ENCODE measurements at regions of chr1 and their contacts with region 1.

Region 1: GRCh38 chr1:93629099-93630059 is 52.3 kb downstream of the BCAR3 start:
- DNase-seq: peak; percentile 85
- ATAC-seq: peak; percentile 78
- H3K4me3 ChIP-seq: no peak overlapping the region
- H3K27ac ChIP-seq: 0 out of 2 replicates have a peak overlapping the region, but pooled peaks have one; percentile 8
- H3K4me1 ChIP-seq: peaks cover 12% of the 10 kb centered on the region
- H3K27me3 ChIP-seq: no peaks in the 10 kb centered on the region
- CTCF ChIP-seq: peak; percentile 88
- POLR2A ChIP-seq: 0 out of 2 replicates have a peak, but pooled peaks have one; percentile 24
- RAD21 ChIP-seq: peak; percentile 95

Region 2: DNA sequence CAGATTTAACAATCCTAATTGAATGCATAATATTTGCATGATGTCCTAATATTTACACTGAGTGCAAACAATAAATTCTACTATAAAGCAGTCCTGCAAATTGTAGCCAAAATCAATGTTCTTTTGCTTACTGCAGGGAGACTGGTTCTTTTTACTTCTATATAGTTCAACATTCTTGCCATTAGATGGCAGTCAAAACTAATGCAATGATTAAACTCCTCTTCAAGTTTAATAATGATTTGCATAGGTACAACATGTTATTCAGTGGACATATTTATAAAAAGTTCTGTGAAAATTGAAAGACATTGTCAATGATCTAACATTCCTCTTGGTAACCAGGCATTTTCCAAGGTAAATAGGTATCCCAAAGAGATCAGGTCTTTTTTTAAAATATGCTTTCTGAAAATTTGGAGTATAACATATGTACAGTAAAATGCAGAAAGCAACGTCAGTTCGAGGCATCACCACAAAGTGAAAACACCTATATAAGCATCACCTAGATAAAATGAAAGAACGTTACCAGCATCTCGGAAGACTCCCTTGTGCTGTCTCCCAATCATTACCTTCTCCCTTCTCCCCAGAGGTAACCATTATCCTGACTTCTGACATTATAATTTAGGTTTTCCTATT is 191.3 kb before region 1 on chr1:
- CTCF ChIA-PET with region 1: no interaction called
- POLR2A ChIA-PET with region 1: no interaction called
- dilution Hi-C with region 1: no loop called
- in situ Hi-C with region 1: loop called (anchors 10 kb)
- intact Hi-C with region 1: loop called (anchors 2 kb)
- DNase-seq: peak; percentile 65
- ATAC-seq: peak; percentile 82
- H3K4me3 ChIP-seq: no peak overlapping the region
- H3K27ac ChIP-seq: no peak overlapping the region
- H3K4me1 ChIP-seq: no peaks in the 10 kb centered on the region
- H3K27me3 ChIP-seq: peaks cover 17% of the 10 kb centered on the region
- CTCF ChIP-seq: peak; percentile 78
- POLR2A ChIP-seq: no peak
- RAD21 ChIP-seq: peak; percentile 81

Region 3: GRCh38 chr1:93591676-93592550 is 37.5 kb before region 1 on chr1:
- CTCF ChIA-PET with region 1: no interaction called
- POLR2A ChIA-PET with region 1: no interaction called
- dilution Hi-C with region 1: no loop called
- in situ Hi-C with region 1: no loop called
- intact Hi-C with region 1: no loop called
- DNase-seq: no peak
- ATAC-seq: no peak
- H3K4me3 ChIP-seq: no peak overlapping the region
- H3K27ac ChIP-seq: no peak overlapping the region
- H3K4me1 ChIP-seq: peaks cover 19% of the 10 kb centered on the region
- H3K27me3 ChIP-seq: no peaks in the 10 kb centered on the region
- CTCF ChIP-seq: no peak
- POLR2A ChIP-seq: no peak
- RAD21 ChIP-seq: no peak

Region 4: DNA sequence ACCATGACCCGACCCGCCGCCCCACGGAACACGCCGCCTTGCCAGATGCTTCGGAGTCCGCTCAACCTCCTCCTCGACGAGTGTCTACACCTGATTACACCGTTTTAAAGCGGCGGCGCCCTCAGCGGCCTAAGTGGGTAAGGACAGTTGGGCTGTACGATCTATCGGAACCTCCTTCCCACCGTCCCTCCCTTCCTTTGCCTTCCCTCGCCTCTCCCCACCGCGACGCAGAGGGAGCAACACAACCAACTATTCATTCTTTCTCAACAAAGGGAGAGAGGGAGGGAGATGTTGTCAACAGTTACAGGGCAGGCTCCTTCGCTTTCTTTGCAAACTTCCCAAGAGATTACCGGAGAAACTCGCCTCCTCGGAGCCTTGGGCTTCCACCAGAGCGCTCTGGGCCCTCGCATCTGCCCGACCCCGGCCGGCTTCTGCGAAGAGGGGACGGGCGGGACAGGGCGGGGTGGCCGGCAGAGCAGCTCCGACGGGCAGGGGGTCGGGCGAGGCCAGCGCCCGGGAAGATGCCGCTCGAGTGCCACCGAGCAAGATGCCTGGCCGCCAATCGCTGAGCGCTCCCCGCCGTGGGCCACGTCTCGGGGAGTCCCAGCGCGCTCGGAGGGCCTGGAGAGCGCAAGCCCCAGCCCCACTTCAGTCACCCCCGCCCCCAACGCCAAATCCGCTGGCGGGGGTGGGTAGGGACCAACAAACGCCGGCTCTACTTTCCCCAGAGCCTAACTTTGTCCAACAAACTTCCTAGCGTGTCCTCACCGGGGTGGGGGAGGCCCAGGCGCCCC is 51.6 kb after region 1 on chr1:
- CTCF ChIA-PET with region 1: interaction called, 7 read pairs
- POLR2A ChIA-PET with region 1: no interaction called
- dilution Hi-C with region 1: no loop called
- in situ Hi-C with region 1: no loop called
- intact Hi-C with region 1: loop called (anchors 1 kb)
- DNase-seq: peak; percentile 89
- ATAC-seq: peak; percentile 75
- H3K4me3 ChIP-seq: peak overlapping the region; percentile 57
- H3K27ac ChIP-seq: peak overlapping the region; percentile 67
- H3K4me1 ChIP-seq: peaks cover 21% of the 10 kb centered on the region
- H3K27me3 ChIP-seq: no peaks in the 10 kb centered on the region
- CTCF ChIP-seq: peak; percentile 62
- POLR2A ChIP-seq: no peak
- RAD21 ChIP-seq: peak; percentile 66

Region 5: GRCh38 chr1:93734999-93735398 is 105.6 kb after region 1 on chr1:
- CTCF ChIA-PET with region 1: no interaction called
- POLR2A ChIA-PET with region 1: no interaction called
- dilution Hi-C with region 1: no loop called
- in situ Hi-C with region 1: no loop called
- intact Hi-C with region 1: loop called (anchors 5 kb)
- DNase-seq: no peak
- ATAC-seq: no peak
- H3K4me3 ChIP-seq: no peak overlapping the region
- H3K27ac ChIP-seq: no peak overlapping the region
- H3K4me1 ChIP-seq: peaks cover 20% of the 10 kb centered on the region
- H3K27me3 ChIP-seq: no peaks in the 10 kb centered on the region
- CTCF ChIP-seq: peak; percentile 40
- POLR2A ChIP-seq: no peak
- RAD21 ChIP-seq: peak; percentile 32

Region 6: DNA sequence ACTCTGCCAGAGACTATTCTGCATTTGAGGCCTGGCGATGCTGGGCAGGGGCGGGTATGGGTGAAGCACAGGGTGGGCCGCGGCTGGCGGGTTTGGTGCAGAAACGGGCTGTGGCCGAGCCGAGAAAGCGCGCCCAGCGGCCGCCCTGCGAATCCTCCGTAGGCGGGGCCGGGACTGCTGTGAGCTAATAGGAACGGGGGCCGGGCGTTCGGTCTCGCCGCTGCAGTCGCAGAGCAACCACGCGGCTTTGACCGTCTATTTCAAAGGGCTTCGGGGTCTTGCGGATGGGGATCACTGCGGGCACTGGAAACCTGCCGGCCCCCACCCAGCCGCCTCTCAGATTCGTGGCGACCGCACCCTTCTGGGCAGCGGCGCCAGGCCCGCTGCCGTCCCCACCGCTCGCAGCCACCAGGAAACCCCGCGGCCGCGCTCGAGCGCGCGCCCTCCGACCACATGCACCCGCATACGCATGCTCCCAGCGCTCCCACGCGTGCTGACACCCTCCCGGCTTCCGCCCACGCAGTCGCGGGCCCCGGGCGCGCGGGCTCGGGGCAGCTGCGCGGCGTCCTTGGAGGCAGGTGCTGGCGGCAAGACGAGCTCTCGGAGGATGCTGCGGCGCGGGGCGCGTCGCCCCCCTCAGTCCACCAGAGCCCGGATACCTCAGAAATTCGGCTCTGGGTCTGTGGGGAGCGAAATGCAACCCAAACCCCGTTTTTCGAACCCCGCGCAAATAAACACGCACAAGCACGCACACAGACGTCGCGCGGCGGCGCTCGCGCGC is 217.0 kb after region 1 on chr1:
- CTCF ChIA-PET with region 1: interaction called, 11 read pairs
- POLR2A ChIA-PET with region 1: no interaction called
- dilution Hi-C with region 1: no loop called
- in situ Hi-C with region 1: no loop called
- intact Hi-C with region 1: loop called (anchors 1 kb)
- DNase-seq: peak; percentile 74
- ATAC-seq: peak; percentile 61
- H3K4me3 ChIP-seq: peak overlapping the region; percentile 92
- H3K27ac ChIP-seq: peak overlapping the region; percentile 89
- H3K4me1 ChIP-seq: peaks cover 4% of the 10 kb centered on the region
- H3K27me3 ChIP-seq: no peaks in the 10 kb centered on the region
- CTCF ChIP-seq: 0 out of 2 replicates have a peak, but pooled peaks have one; percentile 13
- POLR2A ChIP-seq: peak; percentile 33; the same call in 1 of the 2 replicates
- RAD21 ChIP-seq: 0 out of 2 replicates have a peak, but pooled peaks have one; percentile 10

Measured in IMR-90 (cell line).